PC-9 (cell line): ENCODE measurements at regions of chr17 and their contacts with region 1.

Region 1: GRCh38 chr17:75271233-75271954 is 363 bp upstream of the MIF4GD start:
- DNase-seq: peak in 1 of 2 experiments; percentile 83
- H3K4me3 ChIP-seq: peak overlapping the region; percentile 95
- H3K27ac ChIP-seq: no peak overlapping the region
- H3K4me1 ChIP-seq: peaks cover 7% of the 10 kb centered on the region; the same call in 1 of the 2 replicates
- H3K27me3 ChIP-seq: no peaks in the 10 kb centered on the region
- CTCF ChIP-seq: peak; percentile 63

Region 2: DNA sequence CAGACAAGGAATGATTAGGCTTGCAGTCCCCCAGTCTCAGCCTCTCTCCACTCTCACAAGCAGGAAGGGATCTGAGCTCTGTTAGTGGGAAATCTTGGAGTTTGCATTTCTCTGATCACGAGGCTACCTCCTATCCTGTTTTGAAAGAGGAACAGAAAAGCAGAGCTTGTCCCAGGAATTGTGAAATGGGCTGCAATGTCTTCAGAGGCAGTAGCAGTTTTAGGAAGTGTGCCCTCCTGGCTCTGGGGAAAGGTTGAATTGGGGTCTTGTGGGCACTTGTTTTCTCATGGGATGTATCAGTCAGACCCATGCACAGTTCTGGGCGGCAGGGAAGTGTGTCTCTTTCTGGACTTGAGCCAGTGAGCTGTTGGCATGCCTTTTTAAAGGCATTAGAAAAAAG is 43.1 kb before region 1 on chr17:
- CTCF ChIA-PET with region 1: interaction called, 3 read pairs
- POLR2A ChIA-PET with region 1: interaction called, 18 read pairs
- intact Hi-C with region 1: no loop called
- DNase-seq: no peak
- H3K4me3 ChIP-seq: no peak overlapping the region
- H3K27ac ChIP-seq: no peak overlapping the region
- H3K4me1 ChIP-seq: no peaks in the 10 kb centered on the region
- H3K27me3 ChIP-seq: no peaks in the 10 kb centered on the region
- CTCF ChIP-seq: no peak

Region 3: GRCh38 chr17:75289115-75289831 is 17.9 kb after region 1 on chr17 and contains the start of gene SLC25A19:
- CTCF ChIA-PET with region 1: interaction called, 15 read pairs
- POLR2A ChIA-PET with region 1: interaction called, 9 read pairs
- intact Hi-C with region 1: loop called (anchors 1 kb)
- DNase-seq: peak; percentile 97
- H3K4me3 ChIP-seq: peak within 1 kb of the TSS; percentile 65
- H3K27ac ChIP-seq: peak within 1 kb of the TSS; percentile 48
- H3K4me1 ChIP-seq: peaks cover 4% of the 10 kb centered on the region
- H3K27me3 ChIP-seq: no peaks in the 10 kb centered on the region
- CTCF ChIP-seq: no peak
- total RNA-seq, gene SLC25A19: 18.7 and 19.4 TPM in 2 replicates

Region 4: GRCh38 chr17:75405365-75406221 is 134.2 kb after region 1 on chr17 and contains the start of gene GRB2:
- CTCF ChIA-PET with region 1: no interaction called
- POLR2A ChIA-PET with region 1: interaction called, 15 read pairs
- intact Hi-C with region 1: loop called (anchors 1 kb)
- DNase-seq: peak; percentile 84 to 99
- H3K4me3 ChIP-seq: peak within 1 kb of the TSS; percentile 82
- H3K27ac ChIP-seq: peak within 1 kb of the TSS; percentile 35
- H3K4me1 ChIP-seq: peaks cover 11% of the 10 kb centered on the region
- H3K27me3 ChIP-seq: no peaks in the 10 kb centered on the region
- CTCF ChIP-seq: no peak
- total RNA-seq, gene GRB2: 75.3 and 81.3 TPM in 2 replicates

Region 5: DNA sequence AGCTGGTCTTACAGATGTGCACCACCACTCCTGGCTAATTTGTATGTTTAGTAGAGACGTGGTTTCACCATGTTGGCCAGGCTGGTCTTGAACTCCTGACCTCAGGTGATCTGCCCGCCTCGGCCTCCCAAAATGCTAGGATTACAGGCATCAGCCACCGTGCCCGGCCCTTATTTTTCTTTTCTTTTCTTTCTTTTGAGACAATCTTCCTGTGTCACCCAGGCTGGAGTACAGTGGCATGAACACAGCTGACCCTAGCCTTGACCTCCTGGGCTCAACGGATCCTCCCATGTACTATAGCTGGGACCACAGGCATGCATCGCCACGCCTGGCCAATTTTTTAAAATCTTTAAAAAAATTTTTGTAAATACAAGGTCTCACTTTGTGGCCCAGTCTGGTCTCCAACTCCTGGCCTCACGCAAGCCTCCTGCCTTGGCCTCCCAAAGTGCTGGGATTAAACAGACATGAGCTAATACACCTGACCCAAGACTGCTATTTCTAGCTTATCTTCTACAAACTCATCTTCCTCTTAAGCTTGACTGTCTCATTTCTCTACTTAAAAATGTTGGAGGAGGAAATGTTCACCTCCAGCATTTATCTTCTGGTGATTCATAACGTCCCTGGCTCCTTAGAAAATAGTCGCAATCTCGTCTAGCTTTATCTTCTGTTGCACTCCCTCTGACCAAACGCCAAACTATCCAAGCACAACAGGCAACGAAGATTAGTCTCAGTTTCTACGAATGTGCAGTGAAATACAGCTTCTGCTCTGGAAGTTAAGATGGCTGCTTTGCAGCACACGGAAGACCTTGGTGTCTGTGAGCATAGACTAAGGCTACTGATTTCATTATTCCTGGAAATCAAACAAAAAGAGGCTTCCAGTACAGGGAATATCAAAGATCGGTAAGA is 176.8 kb after region 1 on chr17:
- CTCF ChIA-PET with region 1: no interaction called
- POLR2A ChIA-PET with region 1: no interaction called
- intact Hi-C with region 1: no loop called
- DNase-seq: no peak
- H3K4me3 ChIP-seq: no peak overlapping the region
- H3K27ac ChIP-seq: no peak overlapping the region
- H3K4me1 ChIP-seq: no peaks in the 10 kb centered on the region
- H3K27me3 ChIP-seq: no peaks in the 10 kb centered on the region
- CTCF ChIP-seq: no peak